Caco-2 (cell line): ENCODE measurements at regions of chr2 and their contacts with region 1.

Region 1: GRCh38 chr2:190648289-190649034 is 421 bp upstream of the NAB1 start:
- DNase-seq: peak; percentile 90 to 91
- H3K4me3 ChIP-seq: peak overlapping the region; percentile 99
- H3K4me3 Mint-ChIP-seq: peak overlapping the region; percentile 91
- H3K27ac Mint-ChIP-seq: peak overlapping the region; percentile 88
- H3K4me1 ChIP-seq: peaks cover 20% of the 10 kb centered on the region
- H3K4me1 Mint-ChIP-seq: peaks cover 16% of the 10 kb centered on the region
- H3K27me3 ChIP-seq: no peaks in the 10 kb centered on the region
- H3K27me3 Mint-ChIP-seq: no peaks in the 10 kb centered on the region
- CTCF ChIP-seq: no peak

Region 2: GRCh38 chr2:190235101-190235500 is 413.4 kb before region 1 on chr2:
- CTCF ChIA-PET with region 1: no interaction called
- POLR2A ChIA-PET with region 1: no interaction called
- intact Hi-C with region 1: no loop called
- DNase-seq: no peak
- H3K4me3 ChIP-seq: no peak overlapping the region
- H3K4me3 Mint-ChIP-seq: no peak overlapping the region
- H3K27ac Mint-ChIP-seq: no peak overlapping the region
- H3K4me1 ChIP-seq: no peaks in the 10 kb centered on the region
- H3K4me1 Mint-ChIP-seq: no peaks in the 10 kb centered on the region
- H3K27me3 ChIP-seq: no peaks in the 10 kb centered on the region
- H3K27me3 Mint-ChIP-seq: no peaks in the 10 kb centered on the region
- CTCF ChIP-seq: no peak

Region 3: GRCh38 chr2:190528521-190529001 is 119.9 kb before region 1 on chr2:
- CTCF ChIA-PET with region 1: no interaction called
- POLR2A ChIA-PET with region 1: no interaction called
- intact Hi-C with region 1: loop called (anchors 1 kb)
- DNase-seq: peak; percentile 78
- H3K4me3 ChIP-seq: no peak overlapping the region
- H3K4me3 Mint-ChIP-seq: peak overlapping the region; percentile 59
- H3K27ac Mint-ChIP-seq: peak overlapping the region; percentile 93
- H3K4me1 ChIP-seq: peaks cover 75% of the 10 kb centered on the region
- H3K4me1 Mint-ChIP-seq: peaks cover 47% of the 10 kb centered on the region
- H3K27me3 ChIP-seq: no peaks in the 10 kb centered on the region
- H3K27me3 Mint-ChIP-seq: no peaks in the 10 kb centered on the region
- CTCF ChIP-seq: no peak

Region 4: GRCh38 chr2:190607014-190607597 is 41.4 kb before region 1 on chr2:
- CTCF ChIA-PET with region 1: no interaction called
- POLR2A ChIA-PET with region 1: interaction called, 3 read pairs
- intact Hi-C with region 1: loop called (anchors 1 kb)
- DNase-seq: peak in 1 of 2 experiments; percentile 41
- H3K4me3 ChIP-seq: no peak overlapping the region
- H3K4me3 Mint-ChIP-seq: no peak overlapping the region
- H3K27ac Mint-ChIP-seq: peak overlapping the region; percentile 24
- H3K4me1 ChIP-seq: peaks cover 61% of the 10 kb centered on the region
- H3K4me1 Mint-ChIP-seq: peaks cover 48% of the 10 kb centered on the region
- H3K27me3 ChIP-seq: no peaks in the 10 kb centered on the region
- H3K27me3 Mint-ChIP-seq: no peaks in the 10 kb centered on the region
- CTCF ChIP-seq: no peak

Region 5: GRCh38 chr2:190636373-190636772 is 12.1 kb before region 1 on chr2:
- CTCF ChIA-PET with region 1: no interaction called
- POLR2A ChIA-PET with region 1: no interaction called
- intact Hi-C with region 1: loop called (anchors 1 kb)
- DNase-seq: peak in 1 of 2 experiments; percentile 33
- H3K4me3 ChIP-seq: no peak overlapping the region
- H3K4me3 Mint-ChIP-seq: no peak overlapping the region
- H3K27ac Mint-ChIP-seq: no peak overlapping the region
- H3K4me1 ChIP-seq: peaks cover 28% of the 10 kb centered on the region
- H3K4me1 Mint-ChIP-seq: peaks cover 29% of the 10 kb centered on the region
- H3K27me3 ChIP-seq: no peaks in the 10 kb centered on the region
- H3K27me3 Mint-ChIP-seq: no peaks in the 10 kb centered on the region
- CTCF ChIP-seq: no peak

Region 6: DNA sequence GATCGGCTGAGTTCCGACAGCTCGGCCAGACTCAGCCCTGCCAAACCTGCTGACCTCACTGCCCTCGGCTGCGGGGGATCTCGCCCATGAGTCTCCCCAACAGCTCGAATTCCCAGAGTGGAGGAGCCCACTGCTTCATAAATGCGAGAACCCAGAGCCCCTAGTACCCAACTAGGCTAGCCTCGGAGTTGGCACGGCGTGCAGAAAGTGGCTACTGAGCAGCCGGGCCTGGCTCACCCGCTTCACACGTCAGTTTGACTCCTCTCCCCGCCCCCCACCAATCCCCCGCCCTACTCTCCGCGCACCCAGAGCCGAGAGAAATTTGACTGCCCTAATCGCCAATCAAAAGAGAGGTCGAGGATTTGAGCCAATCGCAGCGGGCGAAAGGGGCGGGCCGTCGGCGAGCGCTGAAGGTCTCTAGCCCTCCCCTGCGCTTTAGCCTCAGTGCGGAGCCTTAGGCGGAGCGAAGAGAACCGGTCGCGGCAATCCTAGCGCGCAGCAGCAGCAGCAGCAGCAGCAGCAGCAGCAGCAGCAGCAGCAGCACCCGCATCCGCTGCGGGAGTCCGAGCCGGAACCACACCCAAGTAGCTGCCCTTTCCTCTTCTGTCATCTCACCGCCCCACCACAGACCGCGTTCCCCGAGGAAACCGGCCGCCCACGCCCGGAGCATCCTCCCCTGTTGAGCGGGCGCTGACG is 232.1 kb after region 1 on chr2 and contains the start of gene GLS:
- CTCF ChIA-PET with region 1: no interaction called
- POLR2A ChIA-PET with region 1: no interaction called
- intact Hi-C with region 1: loop called (anchors 10 kb)
- DNase-seq: peak; percentile 97
- H3K4me3 ChIP-seq: peak within 1 kb of the TSS; percentile 98
- H3K4me3 Mint-ChIP-seq: peak within 1 kb of the TSS; percentile 97
- H3K27ac Mint-ChIP-seq: peak within 1 kb of the TSS; percentile 94
- H3K4me1 ChIP-seq: peaks cover 12% of the 10 kb centered on the region
- H3K4me1 Mint-ChIP-seq: peaks cover 19% of the 10 kb centered on the region
- H3K27me3 ChIP-seq: no peaks in the 10 kb centered on the region
- H3K27me3 Mint-ChIP-seq: no peaks in the 10 kb centered on the region
- CTCF ChIP-seq: no peak
- total RNA-seq, gene GLS: 107 and 136 TPM in 2 replicates

Region 7: DNA sequence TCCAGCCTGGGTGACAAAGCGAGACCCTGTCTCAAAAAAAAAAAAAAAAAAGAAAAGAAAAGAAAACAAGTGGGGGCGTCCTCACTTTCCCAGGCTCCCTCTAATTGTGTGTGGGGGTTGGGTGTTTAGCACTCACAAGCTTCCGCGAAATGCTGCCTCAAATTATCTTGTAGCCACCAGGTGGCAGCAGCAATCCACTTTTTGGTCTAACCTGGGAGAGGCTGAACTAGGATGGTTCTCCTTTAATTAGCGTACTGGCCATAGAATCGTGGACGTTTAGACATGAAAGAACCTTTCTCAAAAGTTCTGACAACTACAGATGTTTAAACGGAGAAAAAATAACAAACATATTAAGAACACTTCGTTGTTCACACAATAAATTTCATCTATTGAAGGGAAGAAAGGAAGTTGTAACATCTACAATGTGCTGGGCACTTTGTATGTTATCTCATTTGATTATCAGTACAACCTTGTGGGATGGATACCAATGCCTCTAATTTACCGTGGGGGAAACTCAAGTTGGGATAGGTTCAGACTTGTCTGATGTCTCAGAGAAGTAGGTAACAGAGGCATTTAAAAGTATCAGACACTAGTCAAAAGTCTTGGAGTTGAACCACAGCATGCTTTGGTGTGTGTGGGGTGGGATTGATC is 906.8 kb after region 1 on chr2:
- CTCF ChIA-PET with region 1: no interaction called
- POLR2A ChIA-PET with region 1: no interaction called
- intact Hi-C with region 1: no loop called
- DNase-seq: peak; percentile 86 to 92
- H3K4me3 ChIP-seq: no peak overlapping the region
- H3K4me3 Mint-ChIP-seq: peak overlapping the region; percentile 49
- H3K27ac Mint-ChIP-seq: peak overlapping the region; percentile 29
- H3K4me1 ChIP-seq: peaks cover 7% of the 10 kb centered on the region
- H3K4me1 Mint-ChIP-seq: peaks cover 29% of the 10 kb centered on the region
- H3K27me3 ChIP-seq: no peaks in the 10 kb centered on the region
- H3K27me3 Mint-ChIP-seq: no peaks in the 10 kb centered on the region
- CTCF ChIP-seq: peak; percentile 72 to 84